Activated CD8-positive, alpha-beta T cell treated with anti-CD3 and anti-CD28 coated beads, Interleukin-2, amount 10 ng/mL, durations not matched to agents 7 days and 5 days (primary cell): ENCODE measurements at regions of chr11 and their contacts with region 1.

Region 1: DNA sequence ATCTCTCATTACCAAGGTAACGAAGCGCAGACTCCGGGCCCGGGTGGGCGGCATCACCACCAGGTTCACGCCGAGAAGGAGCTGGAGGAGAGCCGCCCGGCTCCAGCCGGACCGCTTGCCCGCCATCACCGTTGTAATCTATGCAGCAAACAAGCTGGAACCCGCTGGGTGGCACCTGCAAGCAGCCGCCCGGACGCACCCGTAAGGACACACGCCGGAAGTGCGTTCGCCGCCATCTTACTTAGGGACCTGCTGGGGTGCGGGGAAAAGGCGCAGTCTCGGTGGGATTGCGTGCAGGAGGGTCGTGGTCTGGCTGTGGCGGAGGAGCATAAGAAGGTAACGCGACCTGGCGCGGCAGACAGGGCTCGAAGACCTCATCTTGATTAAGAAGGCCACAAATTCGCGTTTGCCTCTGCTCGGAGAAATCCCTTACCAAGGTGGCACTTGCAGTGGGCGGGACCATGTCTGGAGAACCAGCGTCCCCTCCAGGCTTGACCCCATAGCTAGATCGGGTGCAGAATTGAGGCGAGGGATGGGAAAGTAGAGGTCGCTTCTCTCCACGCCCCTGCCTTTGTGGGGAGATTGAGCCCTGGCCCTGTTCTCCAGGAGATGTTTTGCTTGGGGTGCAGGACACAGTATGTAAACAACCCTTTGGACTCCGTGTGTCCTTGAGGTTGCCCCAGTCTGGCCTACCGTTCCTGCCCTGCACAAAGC is at the start of gene ACP2:
- DNase-seq: peak; percentile 92
- ATAC-seq: peak; percentile 98
- H3K4me3 Mint-ChIP-seq: peak within 1 kb of the TSS; percentile 92
- H3K27ac Mint-ChIP-seq: peak within 1 kb of the TSS; percentile 95
- H3K4me1 Mint-ChIP-seq: peaks cover 30% of the 10 kb centered on the region
- H3K27me3 Mint-ChIP-seq: no peaks in the 10 kb centered on the region
- total RNA-seq, gene ACP2: 26.7 to 27.5 TPM

Region 2: DNA sequence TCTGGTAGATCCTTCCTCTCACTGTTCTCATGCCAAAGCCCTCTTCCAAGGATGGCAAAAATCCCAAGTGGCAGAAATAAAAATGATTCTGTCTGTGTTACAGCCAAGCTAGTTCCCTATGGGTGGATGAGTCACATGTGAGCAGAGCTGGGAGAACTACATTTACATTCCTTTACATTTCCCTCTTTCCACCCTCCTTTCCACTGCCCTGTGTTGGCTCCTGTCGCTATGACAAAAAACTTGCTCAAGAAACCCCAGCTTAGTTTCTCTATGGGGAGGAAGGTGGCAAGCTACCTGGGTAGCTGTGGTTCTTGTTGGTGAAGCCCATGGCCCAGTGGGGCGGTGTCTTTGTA is 44.2 kb before region 1 on chr11:
- CTCF ChIA-PET with region 1: no interaction called
- POLR2A ChIA-PET with region 1: no interaction called
- DNase-seq: no peak
- ATAC-seq: no peak
- H3K4me3 Mint-ChIP-seq: no peak overlapping the region
- H3K27ac Mint-ChIP-seq: no peak overlapping the region
- H3K4me1 Mint-ChIP-seq: peaks cover 2% of the 10 kb centered on the region
- H3K27me3 Mint-ChIP-seq: peaks cover 4% of the 10 kb centered on the region

Region 3: GRCh38 chr11:47233989-47234668 is 14.7 kb before region 1 on chr11:
- CTCF ChIA-PET with region 1: interaction called, 10 read pairs
- POLR2A ChIA-PET with region 1: interaction called, 14 read pairs
- DNase-seq: peak; percentile 38
- ATAC-seq: peak; percentile 55
- H3K4me3 Mint-ChIP-seq: no peak overlapping the region
- H3K27ac Mint-ChIP-seq: peak overlapping the region; percentile 74
- H3K4me1 Mint-ChIP-seq: peaks cover 24% of the 10 kb centered on the region
- H3K27me3 Mint-ChIP-seq: no peaks in the 10 kb centered on the region

Region 4: GRCh38 chr11:47259178-47259977 is 10.6 kb after region 1 on chr11:
- CTCF ChIA-PET with region 1: interaction called, 68 read pairs
- POLR2A ChIA-PET with region 1: interaction called, 17 read pairs
- DNase-seq: peak; percentile 62
- ATAC-seq: peak; percentile 78
- H3K4me3 Mint-ChIP-seq: no peak overlapping the region
- H3K27ac Mint-ChIP-seq: peak overlapping the region; percentile 62
- H3K4me1 Mint-ChIP-seq: peaks cover 35% of the 10 kb centered on the region
- H3K27me3 Mint-ChIP-seq: no peaks in the 10 kb centered on the region

Region 5: DNA sequence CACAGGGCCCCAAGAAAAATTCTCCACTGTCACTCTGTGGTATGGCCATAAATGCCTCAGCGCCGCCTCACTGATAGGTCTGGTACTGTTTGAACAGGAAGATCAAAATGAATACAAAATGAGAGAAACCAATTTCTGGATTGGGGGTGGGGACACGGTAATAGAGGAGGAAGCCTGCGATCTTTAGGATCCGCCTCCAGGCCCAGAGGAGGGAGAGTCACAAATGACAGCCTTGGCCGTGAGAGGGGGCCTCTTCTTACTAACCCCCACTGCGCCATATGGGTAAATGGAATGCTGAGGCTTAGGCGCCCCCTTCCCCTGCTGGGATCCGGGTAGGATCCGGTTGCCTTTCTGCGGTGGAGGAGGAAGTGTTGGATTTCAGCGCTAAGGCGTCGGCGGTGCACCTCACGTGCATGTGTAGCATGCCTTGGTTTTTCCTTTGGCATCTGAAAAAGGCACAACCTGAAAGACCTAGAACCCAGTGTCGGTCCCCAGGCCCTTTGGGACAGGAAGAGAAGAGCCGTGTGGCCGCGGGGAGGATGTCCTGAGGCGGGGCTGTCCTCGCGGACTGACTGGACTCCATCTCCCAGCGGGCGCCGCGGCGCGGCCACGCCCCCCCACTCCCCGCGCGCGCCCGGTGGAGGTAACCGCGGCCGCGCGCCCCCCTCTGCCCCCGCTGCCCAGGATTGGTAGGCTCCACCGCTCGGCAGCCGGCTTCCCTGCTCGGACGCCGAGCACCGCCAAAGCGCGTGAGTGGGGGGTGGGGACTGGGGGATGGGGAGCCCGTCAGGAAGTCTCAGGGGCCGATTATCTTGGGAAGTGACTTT is 20.4 kb after region 1 on chr11:
- CTCF ChIA-PET with region 1: interaction called, 19 read pairs
- POLR2A ChIA-PET with region 1: interaction called, 16 read pairs
- DNase-seq: peak; percentile 90
- ATAC-seq: peak; percentile 55
- H3K4me3 Mint-ChIP-seq: peak overlapping the region; percentile 84
- H3K27ac Mint-ChIP-seq: peak overlapping the region; percentile 98
- H3K4me1 Mint-ChIP-seq: peaks cover 68% of the 10 kb centered on the region
- H3K27me3 Mint-ChIP-seq: no peaks in the 10 kb centered on the region